ENCODE measurements at regions of chr20 and their contacts with region 1.

Region 1: GRCh38 chr20:63955827-63956663 is at the start of gene UCKL1:
- DNase-seq: peak; percentile 73 to 99 (median 88)

Region 2: DNA sequence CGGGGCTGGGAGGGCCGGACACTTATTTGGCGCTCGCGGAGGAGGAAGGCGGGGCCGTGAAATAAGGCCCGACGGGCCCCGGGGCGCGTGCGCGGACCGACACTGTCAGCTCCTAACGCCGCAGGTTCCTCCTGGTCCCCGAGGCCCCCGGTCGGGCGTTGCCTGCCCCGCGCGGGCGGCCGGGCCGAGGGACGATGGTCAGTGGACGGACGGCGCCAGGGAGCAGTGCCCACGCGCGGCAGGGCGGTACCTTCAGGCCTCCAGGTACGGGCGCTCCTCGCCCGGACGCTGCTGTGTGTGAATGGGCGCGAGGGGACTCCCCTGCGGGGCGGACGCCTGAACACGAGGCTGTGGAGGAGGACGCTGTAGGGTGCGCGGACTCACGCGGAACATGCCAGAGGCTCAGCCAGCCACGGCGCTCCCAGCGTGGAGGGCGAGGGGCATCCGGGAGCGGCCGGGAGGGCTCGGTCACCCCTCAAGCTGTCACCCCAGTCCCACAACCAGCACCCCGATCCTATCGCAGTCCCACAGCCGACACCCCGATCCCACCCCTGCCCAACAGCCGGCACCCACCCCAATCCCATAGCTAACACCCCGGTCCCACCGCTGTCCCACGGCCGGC is 328.8 kb before region 1 on chr20:
- intact Hi-C with region 1: loop called (anchors 5 kb)
- DNase-seq: peak; percentile 85 to 98 (median 90)

Region 3: DNA sequence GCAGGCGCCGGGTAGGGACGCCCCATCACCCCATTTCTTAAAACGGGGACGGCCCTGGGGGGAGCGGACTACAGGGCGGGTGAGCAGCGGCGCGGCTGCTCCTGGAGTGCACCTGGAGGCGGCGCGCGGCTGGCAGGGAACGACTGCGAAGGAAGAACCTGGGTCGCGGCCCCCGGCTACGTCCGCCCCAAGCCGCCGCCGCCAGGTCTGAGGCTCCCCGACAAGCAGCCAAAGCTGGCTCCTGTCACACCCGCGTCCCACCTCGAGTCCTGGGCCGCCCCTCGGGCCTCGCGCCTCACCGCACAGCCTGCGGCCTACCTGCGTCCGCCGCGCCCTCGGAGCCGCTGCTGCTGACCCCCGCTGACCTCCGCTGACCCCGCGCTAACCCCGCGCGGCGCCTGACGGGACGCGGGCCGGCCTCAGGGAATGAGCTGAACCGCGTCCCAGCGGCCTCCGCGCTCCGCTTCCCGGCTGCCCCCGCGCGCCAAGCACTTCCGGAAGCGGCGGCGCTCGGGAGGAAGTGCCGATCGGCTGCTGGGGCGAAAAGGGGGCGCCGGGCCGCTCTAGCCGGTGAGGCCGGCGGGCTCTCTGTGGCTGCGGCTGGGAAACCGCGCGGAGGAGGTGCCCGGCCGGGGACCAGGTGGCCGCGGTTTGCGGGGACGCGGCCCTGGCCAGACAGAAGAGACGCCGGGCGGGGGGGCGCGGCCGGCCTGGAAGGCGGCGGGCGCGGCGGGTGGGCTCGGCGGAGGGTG is 248.3 kb before region 1 on chr20 and contains the starts of genes ARFRP1 and ZGPAT:
- intact Hi-C with region 1: loop called (anchors 2 kb)
- DNase-seq: peak; percentile 89 to 99 (median 94)

Region 4: GRCh38 chr20:63894358-63895201 is 61.5 kb before region 1 on chr20 and contains the start of gene DNAJC5:
- intact Hi-C with region 1: loop called (anchors 2 kb)
- DNase-seq: peak; percentile 92 to 100 (median 96)

Region 5: GRCh38 chr20:63911176-63911575 is 44.9 kb before region 1 on chr20:
- intact Hi-C with region 1: loop called (anchors 1 kb)
- DNase-seq: peak in 6 of 10 donors; percentile 37 to 89 (median 46)

Region 6: GRCh38 chr20:63980806-63981728 is 25.0 kb after region 1 on chr20 and contains the start of gene PRPF6:
- intact Hi-C with region 1: loop called (anchors 1 kb)
- DNase-seq: peak; percentile 90 to 99 (median 96)

Region 7: DNA sequence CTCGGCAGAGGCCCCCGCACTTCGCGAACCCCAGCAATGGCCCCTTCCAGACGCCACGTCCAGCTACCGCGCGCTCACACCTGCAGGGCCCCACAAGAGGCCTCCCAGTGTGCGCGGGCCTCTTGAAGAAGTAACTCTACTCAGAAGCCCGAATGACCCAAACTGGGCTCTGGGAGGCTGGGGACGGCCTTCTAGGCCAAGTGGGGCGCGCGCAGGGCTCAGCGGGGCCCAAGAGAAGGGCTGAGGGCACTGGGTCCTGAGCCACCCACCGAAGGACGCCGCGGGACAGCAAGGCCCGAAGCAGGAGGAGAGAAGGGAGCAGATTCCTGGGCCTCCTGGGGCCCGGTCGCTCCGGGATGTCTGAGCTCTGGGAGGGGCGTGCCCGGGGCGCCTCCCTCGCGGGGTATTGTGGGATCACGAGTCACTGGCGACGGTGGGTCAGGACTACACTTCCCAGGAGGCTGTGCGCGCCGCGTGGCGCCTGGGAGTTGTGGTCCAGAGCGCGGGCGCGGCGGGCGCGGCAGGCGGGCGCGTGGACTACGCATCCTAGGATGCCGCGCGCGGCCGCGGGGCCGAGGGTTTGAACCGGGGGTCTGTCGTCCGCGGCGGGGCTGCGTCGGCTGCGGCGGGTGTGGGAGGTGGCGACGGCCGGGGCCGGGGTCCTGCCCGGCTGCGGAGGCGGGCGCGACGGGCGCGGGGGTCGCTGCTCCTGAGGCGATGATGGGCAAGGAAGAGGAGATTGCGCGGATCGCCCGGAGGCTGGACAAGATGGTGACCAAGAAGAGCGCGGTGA is 106.7 kb after region 1 on chr20 and contains the start of gene TCEA2:
- intact Hi-C with region 1: loop called (anchors 1 kb)
- DNase-seq: peak; percentile 95 to 100 (median 99)